ENCODE measurements at regions of chr2 and their contacts with region 1.

Region 1: DNA sequence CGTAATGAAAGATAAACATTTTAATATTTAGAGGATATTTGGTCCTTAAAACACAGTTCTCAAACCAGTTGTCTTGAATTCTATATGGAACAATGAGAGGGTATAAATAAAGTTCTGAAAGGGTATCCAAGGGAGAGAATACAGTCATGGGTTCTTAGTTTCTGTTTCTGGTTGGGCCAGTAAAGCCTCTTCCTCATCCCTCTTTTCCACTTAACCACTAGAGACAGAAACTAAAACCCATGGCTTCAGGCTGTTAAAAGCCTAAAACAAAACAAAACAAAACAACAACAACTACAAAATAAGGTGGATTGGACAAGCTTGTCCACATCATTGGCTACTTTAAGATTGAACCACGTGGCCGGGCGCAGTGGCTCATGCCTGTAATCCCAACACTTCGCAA is 18.8 kb downstream of the COQ10B start:
- DNase-seq: no peak
- H3K4me3 ChIP-seq: no peak overlapping the region
- H3K27ac ChIP-seq: no peak overlapping the region
- H3K4me1 ChIP-seq: no peaks in the 10 kb centered on the region
- H3K27me3 ChIP-seq: no peaks in the 10 kb centered on the region
- CTCF ChIP-seq: no peak

Region 2: GRCh38 chr2:197159661-197160211 is 312.4 kb before region 1 on chr2:
- CTCF ChIA-PET with region 1: no interaction called
- POLR2A ChIA-PET with region 1: no interaction called
- intact Hi-C with region 1: no loop called
- DNase-seq: peak in 1 of 2 experiments; percentile 81
- H3K4me3 ChIP-seq: 0 out of 2 replicates have a peak overlapping the region, but pooled peaks have one; percentile 26
- H3K27ac ChIP-seq: peak overlapping the region; percentile 67
- H3K4me1 ChIP-seq: peaks cover 28% of the 10 kb centered on the region
- H3K27me3 ChIP-seq: no peaks in the 10 kb centered on the region
- CTCF ChIP-seq: no peak

Region 3: DNA sequence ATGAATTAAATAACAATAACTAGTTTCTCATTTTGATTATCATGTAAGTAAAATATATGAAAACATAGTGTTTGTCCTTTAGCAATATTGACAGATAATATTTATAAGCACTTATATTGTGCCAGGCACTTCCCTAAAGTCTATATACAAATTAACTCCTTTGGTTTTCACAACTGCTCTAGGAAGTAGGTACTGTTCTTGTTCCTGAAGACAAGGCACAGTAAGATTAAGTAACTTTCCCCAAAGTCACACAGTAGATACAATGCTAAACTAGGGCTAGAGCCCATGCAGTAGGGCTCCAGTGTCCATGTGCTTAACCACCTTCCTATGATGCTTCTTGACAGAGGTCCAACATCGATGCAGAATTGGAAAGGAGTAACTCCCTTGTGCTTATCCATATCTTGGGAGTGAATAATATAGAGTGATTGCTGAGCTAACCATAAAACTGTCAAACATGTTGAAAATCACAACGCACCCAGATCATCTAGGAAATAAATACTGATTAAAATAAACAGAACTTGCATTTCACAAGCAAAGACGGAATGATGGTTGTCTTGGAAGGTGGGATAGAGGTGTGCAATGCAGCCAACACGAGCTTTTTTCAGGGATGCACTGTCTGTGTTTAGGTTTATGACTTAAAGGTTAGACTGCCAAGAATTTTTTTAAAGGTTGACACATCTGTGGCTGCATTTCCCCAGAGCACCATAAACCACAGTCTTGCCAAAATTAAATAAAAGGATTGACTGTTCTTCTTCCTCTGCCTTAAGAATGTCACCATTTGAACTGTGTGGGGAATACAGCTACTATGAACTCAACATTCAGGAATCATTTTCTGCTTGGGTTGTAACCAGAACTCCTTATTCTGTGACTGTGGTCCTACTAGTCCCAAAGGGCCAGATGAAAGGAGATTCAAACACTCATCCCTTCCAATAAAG is 242.4 kb before region 1 on chr2:
- CTCF ChIA-PET with region 1: no interaction called
- POLR2A ChIA-PET with region 1: no interaction called
- intact Hi-C with region 1: no loop called
- DNase-seq: no peak
- H3K4me3 ChIP-seq: no peak overlapping the region
- H3K27ac ChIP-seq: no peak overlapping the region
- H3K4me1 ChIP-seq: no peaks in the 10 kb centered on the region
- H3K27me3 ChIP-seq: no peaks in the 10 kb centered on the region
- CTCF ChIP-seq: no peak

Region 4: GRCh38 chr2:197425550-197425949 is 46.6 kb before region 1 on chr2:
- CTCF ChIA-PET with region 1: no interaction called
- POLR2A ChIA-PET with region 1: no interaction called
- intact Hi-C with region 1: loop called (anchors 5 kb)
- DNase-seq: no peak
- H3K4me3 ChIP-seq: no peak overlapping the region
- H3K27ac ChIP-seq: no peak overlapping the region
- H3K4me1 ChIP-seq: no peaks in the 10 kb centered on the region
- H3K27me3 ChIP-seq: no peaks in the 10 kb centered on the region
- CTCF ChIP-seq: no peak

Region 5: DNA sequence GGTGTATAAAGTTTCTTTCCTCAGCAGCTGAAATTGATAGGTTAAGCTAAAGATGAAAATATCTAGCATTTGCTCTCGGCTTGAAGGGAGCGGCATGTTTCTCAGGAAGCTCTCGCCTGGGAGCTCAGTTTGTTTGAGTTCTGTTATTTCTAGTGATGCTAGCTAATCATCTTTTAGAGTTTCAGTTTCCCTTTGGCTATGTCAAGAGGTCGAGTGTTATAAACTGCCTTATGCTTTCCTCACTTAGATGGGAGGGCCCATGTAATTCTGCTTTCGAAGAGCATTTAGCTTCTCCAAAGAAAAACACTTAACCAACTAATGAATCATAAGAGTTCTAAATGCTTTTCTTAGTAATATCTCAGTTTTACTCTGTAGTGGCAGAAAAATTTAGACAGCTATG is 365.9 kb after region 1 on chr2:
- CTCF ChIA-PET with region 1: no interaction called
- POLR2A ChIA-PET with region 1: no interaction called
- intact Hi-C with region 1: no loop called
- DNase-seq: no peak
- H3K4me3 ChIP-seq: no peak overlapping the region
- H3K27ac ChIP-seq: no peak overlapping the region
- H3K4me1 ChIP-seq: no peaks in the 10 kb centered on the region
- H3K27me3 ChIP-seq: no peaks in the 10 kb centered on the region
- CTCF ChIP-seq: no peak

Measured in PC-9 (cell line).